ENCODE measurements at regions of chr7 and their contacts with region 1.

Region 1: DNA sequence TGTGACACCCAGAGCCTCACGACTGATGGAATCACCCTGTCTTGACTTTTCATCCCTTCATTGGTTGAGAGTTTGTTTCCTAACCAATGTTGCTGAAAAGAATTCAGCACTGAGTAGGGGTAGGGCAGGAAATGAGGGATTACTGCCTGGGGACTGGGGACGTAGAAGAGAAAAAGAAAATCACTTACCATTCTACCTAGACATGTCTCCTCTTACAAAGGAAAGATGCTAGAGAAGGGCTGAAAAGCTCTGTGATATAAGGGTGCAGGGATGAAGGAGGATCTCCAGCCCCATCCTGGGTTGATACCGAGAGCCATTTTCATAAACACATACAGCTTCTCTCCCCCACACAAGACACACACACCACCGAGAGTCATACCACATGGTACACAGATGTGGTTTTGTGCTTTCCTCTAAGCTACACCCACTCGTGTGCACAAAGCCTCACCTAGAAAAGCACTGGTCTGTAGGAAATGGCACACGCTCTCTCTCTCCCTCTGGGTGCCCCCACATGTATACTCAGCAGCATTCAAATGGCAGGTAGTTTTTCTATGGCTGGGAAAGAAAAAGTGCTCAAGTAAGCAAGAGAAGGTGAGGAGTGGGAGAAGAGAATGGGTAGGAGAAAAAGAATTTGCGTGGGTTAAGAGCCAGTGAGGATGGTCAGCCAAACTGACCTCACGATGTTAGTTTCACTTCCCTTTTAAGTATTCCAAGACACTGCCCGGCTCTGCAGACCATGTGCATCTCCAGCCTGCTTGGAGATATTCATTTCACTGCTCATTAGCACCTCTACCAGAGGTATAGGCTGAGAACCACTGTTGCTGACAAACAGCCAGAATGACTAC is 85.8 kb downstream of the CALD1 start:
- DNase-seq: peak; percentile 62
- H3K4me3 Mint-ChIP-seq: peak overlapping the region; percentile 65
- H3K27ac Mint-ChIP-seq: peak overlapping the region; percentile 77
- H3K4me1 Mint-ChIP-seq: peaks cover 39% of the 10 kb centered on the region
- H3K27me3 Mint-ChIP-seq: no peaks in the 10 kb centered on the region

Region 2: GRCh38 chr7:134262322-134262721 is 602.9 kb before region 1 on chr7:
- CTCF ChIA-PET with region 1: no interaction called
- intact Hi-C with region 1: no loop called
- DNase-seq: no peak
- H3K4me3 Mint-ChIP-seq: no peak overlapping the region
- H3K27ac Mint-ChIP-seq: no peak overlapping the region
- H3K4me1 Mint-ChIP-seq: no peaks in the 10 kb centered on the region
- H3K27me3 Mint-ChIP-seq: peaks cover 3% of the 10 kb centered on the region

Region 3: GRCh38 chr7:134347559-134347958 is 517.7 kb before region 1 on chr7:
- CTCF ChIA-PET with region 1: no interaction called
- intact Hi-C with region 1: no loop called
- DNase-seq: no peak
- H3K4me3 Mint-ChIP-seq: no peak overlapping the region
- H3K27ac Mint-ChIP-seq: no peak overlapping the region
- H3K4me1 Mint-ChIP-seq: peaks cover 10% of the 10 kb centered on the region
- H3K27me3 Mint-ChIP-seq: peaks cover 26% of the 10 kb centered on the region

Region 4: GRCh38 chr7:134886353-134887081 is 21.3 kb after region 1 on chr7:
- CTCF ChIA-PET with region 1: no interaction called
- intact Hi-C with region 1: loop called (anchors 2 kb)
- DNase-seq: no peak
- H3K4me3 Mint-ChIP-seq: no peak overlapping the region
- H3K27ac Mint-ChIP-seq: peak overlapping the region; percentile 29
- H3K4me1 Mint-ChIP-seq: peaks cover 28% of the 10 kb centered on the region
- H3K27me3 Mint-ChIP-seq: no peaks in the 10 kb centered on the region

Region 5: GRCh38 chr7:134908289-134908688 is 43.1 kb after region 1 on chr7:
- CTCF ChIA-PET with region 1: no interaction called
- intact Hi-C with region 1: loop called (anchors 1 kb)
- DNase-seq: peak; percentile 17
- H3K4me3 Mint-ChIP-seq: no peak overlapping the region
- H3K27ac Mint-ChIP-seq: no peak overlapping the region
- H3K4me1 Mint-ChIP-seq: peaks cover 15% of the 10 kb centered on the region
- H3K27me3 Mint-ChIP-seq: no peaks in the 10 kb centered on the region

Region 6: DNA sequence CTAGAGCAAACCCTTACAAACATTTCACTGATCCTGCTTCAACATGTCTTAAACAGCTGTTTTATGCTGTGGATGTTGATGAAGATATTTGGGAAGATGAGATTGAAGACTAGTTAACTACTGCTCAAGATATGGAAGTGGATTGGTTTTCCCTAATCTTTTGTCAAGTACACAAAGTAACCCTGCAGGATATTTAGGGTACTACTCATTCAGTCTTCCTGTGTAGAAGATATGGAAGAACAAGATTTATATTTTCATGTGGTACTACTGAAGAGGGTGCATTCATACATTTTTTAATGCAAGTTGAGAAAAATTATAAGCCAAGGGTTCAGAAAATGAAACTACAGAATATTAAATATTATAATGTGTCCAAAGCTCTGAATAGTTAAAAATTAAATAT is 264.4 kb after region 1 on chr7:
- CTCF ChIA-PET with region 1: no interaction called
- intact Hi-C with region 1: no loop called
- DNase-seq: no peak
- H3K4me3 Mint-ChIP-seq: no peak overlapping the region
- H3K27ac Mint-ChIP-seq: no peak overlapping the region
- H3K4me1 Mint-ChIP-seq: no peaks in the 10 kb centered on the region
- H3K27me3 Mint-ChIP-seq: no peaks in the 10 kb centered on the region

Measured in activated naive CD4-positive, alpha-beta T cell treated with anti-CD3 and anti-CD28 coated beads for 36 hours (primary cell).